ENCODE measurements at regions of chr10 and their contacts with region 1.

Region 1: DNA sequence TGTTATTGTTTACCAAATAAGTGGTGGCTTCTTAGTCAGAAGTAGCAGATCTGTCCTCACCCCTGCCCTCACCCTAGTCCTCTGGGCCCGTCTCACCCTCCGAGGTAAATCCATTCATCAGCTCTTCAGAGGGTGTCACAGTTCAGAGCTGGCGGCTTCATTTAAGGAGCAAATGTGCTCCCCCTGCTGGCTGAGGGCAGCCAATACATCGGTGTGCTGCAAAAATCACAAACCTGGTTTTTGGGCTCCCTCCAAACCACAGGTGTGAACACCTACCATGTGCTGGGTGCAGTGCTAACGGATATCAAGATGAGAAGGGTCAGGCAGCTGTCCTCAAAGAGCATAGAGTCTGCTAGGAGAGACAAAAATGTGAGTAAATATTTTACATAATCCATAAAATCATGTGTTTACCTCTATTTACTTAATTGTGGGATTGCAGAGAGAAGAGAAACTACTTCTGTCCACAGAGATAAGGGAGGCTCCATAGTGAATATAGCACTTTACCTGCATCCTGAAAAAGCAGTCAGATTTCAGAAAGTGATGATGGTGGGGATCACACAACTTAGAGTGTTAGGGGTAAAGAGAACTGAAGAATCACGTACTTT is 15.5 kb upstream of the CRTAC1 start:
- DNase-seq: peak; percentile 51
- H3K4me3 ChIP-seq: no peak overlapping the region
- H3K27ac ChIP-seq: no peak overlapping the region
- H3K4me1 ChIP-seq: no peaks in the 10 kb centered on the region
- H3K27me3 ChIP-seq: peaks cover 29% of the 10 kb centered on the region
- CTCF ChIP-seq: peak; percentile 71 to 86 (median 84)
- EP300 ChIP-seq: no peak
- POLR2A ChIP-seq: no peak

Region 2: DNA sequence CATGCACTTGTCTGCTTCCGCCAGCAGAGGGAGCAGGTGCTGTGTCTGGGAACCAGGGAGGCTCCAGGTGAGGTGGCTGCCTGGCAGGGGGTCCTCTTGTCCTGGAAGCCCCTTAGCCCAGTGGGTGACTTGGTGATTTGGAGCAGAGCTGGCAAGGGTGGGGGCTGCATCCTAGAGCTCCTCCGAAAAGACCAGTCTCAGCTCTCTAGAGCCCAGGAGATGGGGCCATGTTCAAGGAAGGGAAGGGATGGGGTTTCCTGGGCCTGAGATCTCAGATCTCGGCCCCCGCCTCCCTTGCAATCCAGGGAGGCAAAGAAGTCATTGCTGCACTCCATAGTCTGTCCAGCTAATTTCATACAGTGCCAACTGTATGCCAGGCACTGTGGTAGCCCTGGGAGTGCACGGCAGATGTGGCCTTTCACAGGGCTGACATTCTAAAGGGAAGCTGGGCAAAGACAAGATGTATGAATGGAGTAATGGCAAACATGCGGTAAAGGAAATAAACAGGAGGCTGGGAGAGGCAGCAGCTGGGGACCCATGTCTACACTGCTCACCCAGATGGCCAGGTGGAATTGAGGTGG is 253.7 kb before region 1 on chr10:
- in situ Hi-C with region 1: loop called in 1 of 4 experiments (anchors 25 kb)
- intact Hi-C with region 1: no loop called
- DNase-seq: peak; percentile 61
- H3K4me3 ChIP-seq: no peak overlapping the region
- H3K27ac ChIP-seq: no peak overlapping the region
- H3K4me1 ChIP-seq: peaks cover 0 to 7% (median 6%) of the 10 kb centered on the region in 4 donors
- H3K27me3 ChIP-seq: peaks cover 19% of the 10 kb centered on the region
- CTCF ChIP-seq: peak; percentile 77 to 90 (median 80)
- EP300 ChIP-seq: no peak
- POLR2A ChIP-seq: no peak

Region 3: GRCh38 chr10:97914837-97915211 is 131.1 kb before region 1 on chr10:
- in situ Hi-C with region 1: loop called (anchors 5 to 25 kb)
- intact Hi-C with region 1: no loop called
- DNase-seq: peak; percentile 78
- H3K4me3 ChIP-seq: no peak overlapping the region
- H3K27ac ChIP-seq: no peak overlapping the region
- H3K4me1 ChIP-seq: peaks cover 0 to 2% (median 0%) of the 10 kb centered on the region in 4 donors
- H3K27me3 ChIP-seq: peaks cover 12% of the 10 kb centered on the region
- CTCF ChIP-seq: peak; percentile 73 to 91 (median 86)
- EP300 ChIP-seq: no peak
- POLR2A ChIP-seq: no peak

Measured in transverse colon (tissue), 4 donors.